ENCODE measurements at regions of chr7 and their contacts with region 1.

Region 1: DNA sequence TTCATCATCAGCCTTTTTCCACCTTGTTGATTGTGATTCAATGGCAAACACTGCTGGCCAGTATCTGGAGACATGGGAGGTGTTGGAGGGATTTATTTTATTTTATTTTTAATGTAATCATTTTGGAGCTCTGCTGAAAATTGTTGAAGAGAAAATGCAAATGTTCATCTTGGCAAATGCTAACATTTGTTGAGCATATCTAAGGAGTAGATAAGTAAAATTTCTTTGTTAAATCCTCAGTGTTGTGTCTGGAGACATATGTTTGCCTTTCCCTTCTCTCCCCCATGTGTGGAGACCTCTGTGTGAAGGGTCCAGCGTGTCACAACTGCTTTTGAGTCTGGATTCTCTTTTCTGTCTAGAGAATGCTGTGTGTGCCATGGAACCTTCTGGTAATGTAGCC is 300.3 kb downstream of the FZD1 start:
- DNase-seq: no peak
- ATAC-seq: no peak
- H3K4me3 ChIP-seq: no peak overlapping the region
- H3K4me3 Mint-ChIP-seq: no peak overlapping the region
- H3K27ac ChIP-seq: no peak overlapping the region
- H3K27ac Mint-ChIP-seq: no peak overlapping the region
- H3K4me1 ChIP-seq: no peaks in the 10 kb centered on the region
- H3K4me1 Mint-ChIP-seq: no peaks in the 10 kb centered on the region
- H3K27me3 ChIP-seq: no peaks in the 10 kb centered on the region
- H3K27me3 Mint-ChIP-seq: no peaks in the 10 kb centered on the region
- CTCF ChIP-seq: no peak

Region 2: DNA sequence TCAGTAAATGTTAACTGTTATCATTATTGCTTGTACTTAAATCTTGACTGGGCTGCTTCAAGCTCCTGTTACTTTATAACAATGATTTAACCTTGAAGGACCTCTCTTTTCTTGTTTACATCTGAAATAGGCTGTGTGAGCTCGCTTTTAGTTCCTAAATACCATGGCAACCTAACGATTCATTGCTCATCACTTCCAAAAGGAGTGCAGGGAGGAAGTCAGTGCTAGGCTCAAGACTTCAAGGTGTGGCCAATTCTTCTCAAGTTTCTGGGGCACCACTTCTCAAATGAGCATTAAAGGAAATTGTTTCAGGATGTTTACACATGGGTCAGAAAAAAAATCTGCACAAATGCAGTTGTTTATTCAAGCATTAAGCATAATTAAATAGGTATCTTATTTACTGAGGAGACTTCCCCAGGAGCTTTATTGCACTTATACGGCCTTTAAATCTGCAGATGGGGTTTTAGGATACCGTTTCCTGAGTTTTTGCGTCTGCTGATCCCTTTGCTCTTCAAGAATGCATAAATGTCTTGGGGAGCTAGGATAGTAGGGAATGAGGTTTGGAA is 31.8 kb after region 1 on chr7:
- intact Hi-C with region 1: loop called (anchors 5 kb)
- DNase-seq: no peak
- ATAC-seq: no peak
- H3K4me3 ChIP-seq: no peak overlapping the region
- H3K4me3 Mint-ChIP-seq: no peak overlapping the region
- H3K27ac ChIP-seq: no peak overlapping the region
- H3K27ac Mint-ChIP-seq: no peak overlapping the region
- H3K4me1 ChIP-seq: no peaks in the 10 kb centered on the region
- H3K4me1 Mint-ChIP-seq: no peaks in the 10 kb centered on the region
- H3K27me3 ChIP-seq: no peaks in the 10 kb centered on the region
- H3K27me3 Mint-ChIP-seq: no peaks in the 10 kb centered on the region
- CTCF ChIP-seq: no peak